Activated CD4-positive, alpha-beta T cell treated with anti-CD3 and anti-CD28 coated beads for 36 hours (primary cell): ENCODE measurements at regions of chr2 and their contacts with region 1.

Region 1: DNA sequence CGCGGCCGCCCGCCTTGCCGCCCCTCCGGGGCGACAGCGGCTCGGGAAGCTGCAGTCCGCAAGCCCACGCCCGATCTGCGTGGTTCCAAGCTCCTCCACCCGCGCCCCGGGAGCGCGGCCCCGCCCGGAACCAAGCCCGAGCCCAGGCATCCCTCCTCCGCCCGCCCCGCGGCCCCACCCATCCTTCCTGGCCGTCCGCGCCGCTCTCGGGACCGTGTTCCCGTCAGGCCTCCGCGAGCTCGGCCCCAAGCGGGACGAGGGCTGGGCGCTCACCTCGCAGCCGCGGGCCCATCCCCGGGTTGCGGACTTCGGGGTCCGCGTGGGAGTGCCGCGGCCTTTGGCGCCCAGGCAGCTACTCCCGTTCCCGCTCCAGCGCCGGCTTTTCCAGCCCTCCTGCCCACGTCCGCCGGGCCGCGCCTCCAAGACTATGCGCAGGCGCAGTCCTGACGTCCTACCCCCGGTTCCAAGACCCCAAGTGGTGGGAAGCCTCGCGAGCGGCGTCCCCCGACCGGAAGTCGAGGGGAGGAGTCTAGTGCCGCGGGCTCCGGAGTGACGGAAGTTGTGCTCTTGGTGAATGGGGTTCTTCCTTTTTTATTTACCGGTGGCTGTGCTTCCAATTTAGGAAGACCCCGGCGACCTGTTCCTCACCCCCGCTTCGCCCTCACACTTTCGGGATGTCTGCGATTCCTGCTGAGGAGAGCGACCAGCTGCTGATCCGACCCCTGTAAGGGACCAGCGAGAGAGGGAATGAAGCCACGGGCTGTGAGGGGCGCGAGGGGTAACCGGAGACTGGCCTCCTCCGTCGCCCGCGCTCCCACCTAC is at the starts of genes CPSF3 and ITGB1BP1:
- DNase-seq: peak; percentile 99
- ATAC-seq: peak; percentile 89
- H3K4me3 Mint-ChIP-seq: no peak within 1 kb of the TSS
- H3K27ac Mint-ChIP-seq: peak within 1 kb of the TSS; percentile 94
- H3K4me1 Mint-ChIP-seq: peaks cover 36% of the 10 kb centered on the region
- H3K27me3 Mint-ChIP-seq: no peaks in the 10 kb centered on the region
- total RNA-seq, gene CPSF3: 72.3 to 103 TPM
- total RNA-seq, gene ITGB1BP1: 89.7 to 92.1 TPM

Region 2: GRCh38 chr2:9003616-9004337 is 419.5 kb before region 1 on chr2 and contains the start of gene MBOAT2:
- CTCF ChIA-PET with region 1: no interaction called
- POLR2A ChIA-PET with region 1: no interaction called
- intact Hi-C with region 1: loop called in 1 of 2 experiments (anchors 1 kb)
- DNase-seq: peak; percentile 89
- ATAC-seq: peak; percentile 96
- H3K4me3 Mint-ChIP-seq: peak within 1 kb of the TSS; percentile 75
- H3K27ac Mint-ChIP-seq: peak within 1 kb of the TSS; percentile 64
- H3K4me1 Mint-ChIP-seq: peaks cover 11% of the 10 kb centered on the region
- H3K27me3 Mint-ChIP-seq: peaks cover 6% of the 10 kb centered on the region
- total RNA-seq, gene MBOAT2: 4.7 to 6.9 TPM

Region 3: DNA sequence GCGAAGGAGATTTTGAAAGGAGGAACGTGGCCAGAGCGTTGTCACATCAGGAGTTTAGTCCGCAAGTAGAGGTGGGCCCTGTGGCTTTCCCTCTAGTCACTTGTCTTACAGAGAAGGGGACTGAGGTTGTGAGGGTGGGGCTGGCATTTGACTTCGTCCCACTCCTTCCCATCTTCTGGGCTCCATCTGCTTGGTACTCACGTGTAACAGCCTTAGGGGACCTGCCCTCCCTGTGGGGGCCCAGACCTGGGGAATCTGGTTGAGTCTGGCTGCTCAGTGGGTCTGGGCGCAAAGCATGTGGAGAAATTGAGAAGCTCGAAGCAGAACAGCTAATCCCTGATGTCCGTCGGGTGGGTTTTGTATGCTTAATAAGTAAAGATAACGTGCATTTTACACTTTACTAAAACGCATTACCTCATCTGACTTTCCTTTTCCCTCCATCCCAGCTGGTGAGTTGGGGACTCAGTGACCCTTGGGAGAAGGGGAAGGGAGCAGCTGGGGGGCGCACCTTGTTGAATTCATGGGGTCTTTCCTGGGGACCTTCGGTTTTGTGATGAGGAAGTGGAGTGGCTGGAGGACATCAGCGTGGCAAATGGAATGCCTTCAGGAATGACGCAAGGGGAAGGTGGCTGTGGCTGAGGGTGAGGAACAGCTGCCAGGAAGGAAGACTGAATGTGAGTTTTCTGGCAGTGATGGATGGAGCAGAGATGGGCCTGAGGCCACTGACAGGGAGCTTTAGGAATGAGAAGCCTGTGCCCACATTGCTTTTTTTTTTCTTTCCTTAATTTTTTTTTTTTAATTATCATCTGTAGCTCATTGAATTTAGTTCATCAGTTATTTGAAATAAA is 171.9 kb before region 1 on chr2:
- CTCF ChIA-PET with region 1: no interaction called
- POLR2A ChIA-PET with region 1: no interaction called
- intact Hi-C with region 1: no loop called
- DNase-seq: no peak
- ATAC-seq: no peak
- H3K4me3 Mint-ChIP-seq: no peak overlapping the region
- H3K27ac Mint-ChIP-seq: no peak overlapping the region
- H3K4me1 Mint-ChIP-seq: no peaks in the 10 kb centered on the region
- H3K27me3 Mint-ChIP-seq: no peaks in the 10 kb centered on the region

Region 4: GRCh38 chr2:9474361-9474967 is 51.2 kb after region 1 on chr2 and contains the start of gene IAH1:
- CTCF ChIA-PET with region 1: interaction called, 4 read pairs
- POLR2A ChIA-PET with region 1: no interaction called
- intact Hi-C with region 1: loop called (anchors 1 to 5 kb)
- DNase-seq: peak; percentile 81
- ATAC-seq: peak; percentile 81
- H3K4me3 Mint-ChIP-seq: peak within 1 kb of the TSS; percentile 79
- H3K27ac Mint-ChIP-seq: peak within 1 kb of the TSS; percentile 75
- H3K4me1 Mint-ChIP-seq: peaks cover 42% of the 10 kb centered on the region
- H3K27me3 Mint-ChIP-seq: no peaks in the 10 kb centered on the region
- total RNA-seq, gene IAH1: 53.7 to 63.7 TPM

Region 5: DNA sequence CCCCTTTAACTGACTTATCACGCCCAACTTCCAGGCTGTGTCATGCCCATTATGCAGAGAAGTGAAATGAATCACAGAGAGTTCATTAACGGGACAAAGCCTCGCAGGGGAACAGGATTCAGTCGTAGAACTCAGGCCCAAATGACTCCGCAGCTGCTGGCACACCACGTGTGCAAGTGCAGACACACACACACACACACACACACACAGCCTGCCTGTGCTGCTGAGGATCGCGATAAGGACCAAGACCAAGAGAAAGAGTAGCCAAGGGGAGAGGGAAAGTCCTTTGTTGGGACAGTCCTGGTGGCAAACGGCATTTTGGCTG is 329.9 kb after region 1 on chr2:
- CTCF ChIA-PET with region 1: no interaction called
- POLR2A ChIA-PET with region 1: no interaction called
- intact Hi-C with region 1: loop called in 1 of 2 experiments (anchors 1 kb)
- DNase-seq: peak; percentile 84
- ATAC-seq: peak; percentile 84
- H3K4me3 Mint-ChIP-seq: peak overlapping the region; percentile 66
- H3K27ac Mint-ChIP-seq: peak overlapping the region; percentile 96
- H3K4me1 Mint-ChIP-seq: peaks cover 61% of the 10 kb centered on the region
- H3K27me3 Mint-ChIP-seq: peaks cover 18% of the 10 kb centered on the region

Region 6: GRCh38 chr2:9951272-9951972 is 528.1 kb after region 1 on chr2 and contains the start of gene GRHL1:
- CTCF ChIA-PET with region 1: no interaction called
- POLR2A ChIA-PET with region 1: no interaction called
- intact Hi-C with region 1: loop called in 1 of 2 experiments (anchors 5 kb)
- DNase-seq: peak; percentile 95
- ATAC-seq: peak; percentile 98
- H3K4me3 Mint-ChIP-seq: peak within 1 kb of the TSS; percentile 68
- H3K27ac Mint-ChIP-seq: no peak within 1 kb of the TSS
- H3K4me1 Mint-ChIP-seq: peaks cover 4% of the 10 kb centered on the region
- H3K27me3 Mint-ChIP-seq: peaks cover 39% of the 10 kb centered on the region
- total RNA-seq, gene GRHL1: 0.27 to 0.53 TPM